ENCODE measurements at regions of chr22 and their contacts with region 1.

Region 1: GRCh38 chr22:26354707-26355106 is 74.4 kb upstream of the ASPHD2 start:
- DNase-seq: no peak
- ATAC-seq: no peak
- H3K4me3 ChIP-seq: no peak overlapping the region
- H3K27ac ChIP-seq: no peak overlapping the region
- H3K4me1 ChIP-seq: no peaks in the 10 kb centered on the region
- H3K27me3 ChIP-seq: peaks cover 3% of the 10 kb centered on the region; the same call in 1 of the 2 replicates
- CTCF ChIP-seq: no peak
- POLR2A ChIP-seq: no peak
- RAD21 ChIP-seq: no peak

Region 2: DNA sequence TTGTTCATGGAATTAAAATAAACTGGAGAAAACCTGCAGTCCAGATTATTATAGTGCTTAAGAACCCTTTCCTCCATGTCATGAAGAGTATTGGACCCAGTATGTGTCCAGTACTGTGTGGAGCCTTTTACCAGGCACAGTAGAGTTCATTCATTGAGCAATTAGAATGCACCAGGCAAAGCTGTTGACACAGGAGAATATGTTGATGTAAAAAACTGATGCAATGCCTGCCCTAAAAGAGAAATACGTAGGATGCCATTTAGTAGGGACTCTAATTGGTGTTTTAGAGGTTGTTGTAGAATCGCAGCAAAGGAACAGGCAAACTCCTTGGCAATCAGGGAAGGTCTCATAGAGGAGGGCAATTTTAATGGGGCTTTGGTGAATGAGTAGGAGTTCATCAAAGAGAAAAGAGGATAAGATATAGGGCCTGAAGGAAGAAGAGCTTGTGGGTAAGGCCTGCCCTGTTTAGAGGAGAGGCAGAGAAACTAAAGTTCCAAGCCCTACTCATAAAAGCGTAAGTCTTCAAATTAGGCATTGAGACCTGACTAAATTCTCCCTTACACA is 59.1 kb before region 1 on chr22:
- CTCF ChIA-PET with region 1: no interaction called
- POLR2A ChIA-PET with region 1: no interaction called
- dilution Hi-C with region 1: no loop called
- in situ Hi-C with region 1: no loop called
- intact Hi-C with region 1: loop called (anchors 10 kb)
- DNase-seq: no peak
- ATAC-seq: no peak
- H3K4me3 ChIP-seq: no peak overlapping the region
- H3K27ac ChIP-seq: no peak overlapping the region
- H3K4me1 ChIP-seq: no peaks in the 10 kb centered on the region
- H3K27me3 ChIP-seq: no peaks in the 10 kb centered on the region
- CTCF ChIP-seq: no peak
- POLR2A ChIP-seq: no peak
- RAD21 ChIP-seq: no peak